GM12878 (cell line): ENCODE measurements at regions of chr4 and their contacts with region 1.

Region 1: DNA sequence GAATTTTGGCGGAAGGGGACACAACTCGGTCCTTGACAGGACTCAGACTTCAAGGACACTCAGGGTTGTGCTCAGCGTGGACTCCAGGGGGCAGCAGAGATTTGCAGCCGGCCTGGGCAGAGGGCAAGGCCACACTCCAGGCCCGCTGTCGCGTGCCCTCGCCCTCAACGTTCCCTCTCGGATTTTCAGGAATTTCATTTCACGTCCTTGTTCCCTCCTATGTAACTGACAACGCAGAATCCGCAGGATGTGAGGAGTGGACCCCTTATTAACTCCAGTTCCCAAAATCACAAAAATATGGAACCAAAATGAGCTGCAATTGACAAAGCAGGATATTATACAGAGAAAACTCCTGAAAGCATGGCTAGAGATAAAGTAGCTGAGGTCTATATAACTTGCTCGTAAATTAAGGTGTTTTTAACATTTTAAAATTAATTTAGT is 21.0 kb upstream of the DCTD start:
- DNase-seq: no peak
- ATAC-seq: peak; percentile 99
- H3K4me3 ChIP-seq: no peak overlapping the region
- H3K27ac ChIP-seq: no peak overlapping the region
- H3K4me1 ChIP-seq: 0 out of 2 replicates have a peak, but pooled peaks cover 3% of the 10 kb centered on the region
- H3K27me3 ChIP-seq: no peaks in the 10 kb centered on the region
- CTCF ChIP-seq: peak; percentile 94 to 97 (median 97)
- EP300 ChIP-seq: no peak
- POLR2A ChIP-seq: no peak
- RAD21 ChIP-seq: peak; percentile 94

Region 2: DNA sequence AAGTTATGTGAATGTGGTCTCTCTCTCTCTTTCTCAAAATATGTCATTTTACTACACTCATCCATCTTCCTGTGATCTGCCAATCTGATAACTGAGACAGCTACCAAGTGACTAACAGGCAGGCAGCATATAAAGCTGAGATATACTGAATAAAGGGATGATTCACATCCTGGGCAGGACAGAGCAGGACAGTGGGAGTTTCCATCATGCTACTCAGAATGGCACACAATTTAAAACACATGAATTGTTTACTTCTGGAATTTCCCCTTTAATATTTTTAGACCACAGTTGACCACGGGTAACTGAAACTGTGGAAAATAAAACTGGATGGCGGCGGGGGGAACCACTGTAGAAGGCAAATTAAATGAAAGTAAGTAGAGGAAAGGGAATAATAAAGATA is 37.6 kb after region 1 on chr4:
- CTCF ChIA-PET with region 1: interaction called, 8 read pairs
- POLR2A ChIA-PET with region 1: interaction called, 3 read pairs
- RAD21 ChIA-PET with region 1: interaction called, 5 read pairs
- SMC1A ChIA-PET with region 1: interaction called, 13 read pairs
- in situ Hi-C with region 1: no loop called
- intact Hi-C with region 1: no loop called
- DNase-seq: peak; percentile 57
- ATAC-seq: peak; percentile 90
- H3K4me3 ChIP-seq: no peak overlapping the region
- H3K27ac ChIP-seq: no peak overlapping the region; the same call in 1 of the 2 replicates
- H3K4me1 ChIP-seq: peaks cover 8% of the 10 kb centered on the region
- H3K27me3 ChIP-seq: no peaks in the 10 kb centered on the region
- CTCF ChIP-seq: no peak
- EP300 ChIP-seq: no peak
- POLR2A ChIP-seq: no peak
- RAD21 ChIP-seq: no peak

Region 3: GRCh38 chr4:183249857-183250256 is 311.6 kb after region 1 on chr4:
- CTCF ChIA-PET with region 1: interaction called, 159 read pairs
- POLR2A ChIA-PET with region 1: interaction called, 4 read pairs
- RAD21 ChIA-PET with region 1: interaction called, 35 read pairs
- SMC1A ChIA-PET with region 1: interaction called, 41 read pairs
- in situ Hi-C with region 1: loop called (anchors 5 kb)
- intact Hi-C with region 1: no loop called
- DNase-seq: no peak
- ATAC-seq: peak; percentile 65
- H3K4me3 ChIP-seq: no peak overlapping the region
- H3K27ac ChIP-seq: no peak overlapping the region
- H3K4me1 ChIP-seq: no peaks in the 10 kb centered on the region
- H3K27me3 ChIP-seq: peaks cover 0 to 2% of the 10 kb centered on the region in 2 experiments; a peak in 1 of 4 replicates
- CTCF ChIP-seq: peak in 2 of 3 experiments; percentile 4 to 46; a peak in 2 of 6 replicates
- EP300 ChIP-seq: no peak
- POLR2A ChIP-seq: no peak
- RAD21 ChIP-seq: peak; percentile 55; the same call in 1 of the 2 replicates

Region 4: DNA sequence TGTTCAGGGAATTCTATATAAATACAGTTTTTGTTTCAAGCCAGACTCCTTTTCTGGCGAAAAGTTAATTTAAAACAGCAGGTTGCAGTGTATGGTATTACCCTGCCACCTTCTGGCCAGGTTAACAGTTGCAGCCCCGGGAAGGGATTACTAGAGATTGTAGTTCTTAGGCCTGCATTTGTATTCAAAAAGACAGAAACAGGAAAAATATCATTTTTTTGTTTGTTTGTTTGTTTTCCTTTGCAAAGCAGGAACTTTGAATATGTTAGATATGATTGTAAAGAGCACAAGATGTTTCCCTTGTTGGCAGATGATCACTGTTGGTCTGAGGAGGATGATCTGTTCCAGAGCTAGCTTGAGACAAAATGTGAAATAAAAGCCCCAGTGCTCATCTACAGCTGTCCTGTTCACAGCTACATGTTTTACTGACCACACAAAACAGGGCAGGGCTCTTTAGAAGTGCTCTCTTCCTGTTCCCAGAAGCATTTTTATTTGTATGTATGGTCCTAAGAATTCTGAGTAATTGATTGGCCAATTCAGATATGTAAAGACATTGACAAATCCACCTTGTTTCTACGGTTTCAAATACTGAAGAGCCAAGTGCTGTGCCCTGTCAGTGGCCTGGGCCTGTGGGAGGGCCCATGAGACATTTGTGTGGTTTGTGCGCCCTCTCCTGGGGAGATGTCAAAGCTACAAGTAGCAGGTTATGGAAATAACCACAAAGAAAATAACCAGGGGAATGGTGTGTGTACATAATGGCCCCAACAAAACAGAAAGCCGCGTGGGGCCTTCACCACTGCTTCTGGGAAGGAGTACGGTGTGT is 323.9 kb after region 1 on chr4:
- CTCF ChIA-PET with region 1: interaction called, 159 read pairs
- POLR2A ChIA-PET with region 1: interaction called, 3 read pairs
- RAD21 ChIA-PET with region 1: interaction called, 33 read pairs
- SMC1A ChIA-PET with region 1: interaction called, 66 read pairs
- in situ Hi-C with region 1: no loop called
- intact Hi-C with region 1: loop called (anchors 1 kb)
- DNase-seq: peak; percentile 27
- ATAC-seq: peak; percentile 97
- H3K4me3 ChIP-seq: no peak overlapping the region
- H3K27ac ChIP-seq: no peak overlapping the region
- H3K4me1 ChIP-seq: no peaks in the 10 kb centered on the region
- H3K27me3 ChIP-seq: no peaks in the 10 kb centered on the region; a peak in 1 of 4 replicates
- CTCF ChIP-seq: peak; percentile 80 to 91 (median 87)
- EP300 ChIP-seq: no peak
- POLR2A ChIP-seq: no peak
- RAD21 ChIP-seq: peak; percentile 93